ENCODE measurements at regions of chr13 and their contacts with region 1.

Region 1: GRCh38 chr13:101144808-101145419 is 271.4 kb downstream of the NALCN start:
- DNase-seq: peak; percentile 31
- CTCF ChIP-seq: peak; percentile 65

Region 2: GRCh38 chr13:101013245-101013644 is 131.7 kb before region 1 on chr13:
- CTCF ChIA-PET with region 1: no interaction called
- POLR2A ChIA-PET with region 1: no interaction called
- DNase-seq: no peak
- CTCF ChIP-seq: no peak

Region 3: DNA sequence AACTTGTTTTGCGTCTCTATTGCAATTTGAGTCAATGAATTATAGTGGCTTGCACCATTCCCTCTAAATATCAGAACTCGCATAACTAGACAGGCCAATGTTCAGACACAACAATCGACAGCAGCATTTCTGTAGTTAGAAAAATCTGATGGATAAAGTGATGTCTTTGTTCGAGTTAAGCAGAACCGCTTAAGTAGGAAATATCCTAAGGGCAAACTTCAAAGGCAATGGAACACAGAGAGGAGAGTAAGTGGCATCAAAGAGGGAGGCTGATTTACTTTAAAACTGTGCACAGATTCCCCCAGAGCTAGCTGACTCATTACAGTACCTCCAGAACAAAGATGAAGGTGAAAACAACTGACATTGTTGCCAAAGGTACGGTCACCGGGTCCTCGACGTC is 62.4 kb before region 1 on chr13:
- CTCF ChIA-PET with region 1: no interaction called
- POLR2A ChIA-PET with region 1: no interaction called
- DNase-seq: no peak
- CTCF ChIP-seq: no peak

Region 4: GRCh38 chr13:101155920-101156319 is 11.0 kb after region 1 on chr13:
- CTCF ChIA-PET with region 1: interaction called, 32 read pairs
- POLR2A ChIA-PET with region 1: no interaction called
- DNase-seq: no peak
- CTCF ChIP-seq: peak; percentile 15

Region 5: GRCh38 chr13:101757446-101758039 is 612.6 kb after region 1 on chr13:
- CTCF ChIA-PET with region 1: interaction called, 11 read pairs
- POLR2A ChIA-PET with region 1: no interaction called
- DNase-seq: peak; percentile 18
- CTCF ChIP-seq: peak; percentile 35

Region 6: GRCh38 chr13:102460801-102461200 is 1315.9 kb after region 1 on chr13:
- CTCF ChIA-PET with region 1: interaction called, 11 read pairs
- POLR2A ChIA-PET with region 1: no interaction called
- DNase-seq: no peak
- CTCF ChIP-seq: no peak